ENCODE measurements at regions of chr15 and their contacts with region 1.

Region 1: GRCh38 chr15:101070502-101071273 is 151.5 kb downstream of the LRRK1 start:
- DNase-seq: no peak
- H3K4me3 ChIP-seq: no peak overlapping the region
- H3K27ac ChIP-seq: peak overlapping the region; percentile 92
- H3K4me1 ChIP-seq: peaks cover 22 to 39% (median 30%) of the 10 kb centered on the region in 4 experiments
- H3K27me3 ChIP-seq: no peaks in the 10 kb centered on the region
- CTCF ChIP-seq: no peak
- EP300 ChIP-seq: no peak
- POLR2A ChIP-seq: no peak
- RAD21 ChIP-seq: no peak

Region 2: GRCh38 chr15:101047301-101047781 is 23.3 kb before region 1 on chr15:
- CTCF ChIA-PET with region 1: interaction called, 13 read pairs
- POLR2A ChIA-PET with region 1: interaction called, 14 read pairs
- DNase-seq: peak in 1 of 2 experiments; percentile 53
- H3K4me3 ChIP-seq: no peak overlapping the region; a peak in 1 of 8 replicates
- H3K27ac ChIP-seq: no peak overlapping the region
- H3K4me1 ChIP-seq: peaks cover 0 to 9% (median 5%) of the 10 kb centered on the region in 4 experiments; a peak in 6 of 7 replicates
- H3K27me3 ChIP-seq: 0 out of 7 replicates have a peak, but pooled peaks cover 0 to 2% (median 0%) of the 10 kb centered on the region in 4 experiments
- CTCF ChIP-seq: no peak
- EP300 ChIP-seq: no peak
- POLR2A ChIP-seq: no peak
- RAD21 ChIP-seq: no peak

Region 3: GRCh38 chr15:101056366-101057334 is 14.0 kb before region 1 on chr15:
- CTCF ChIA-PET with region 1: interaction called, 18 read pairs
- POLR2A ChIA-PET with region 1: interaction called, 14 read pairs
- DNase-seq: peak in 1 of 2 experiments; percentile 41
- H3K4me3 ChIP-seq: no peak overlapping the region
- H3K27ac ChIP-seq: no peak overlapping the region
- H3K4me1 ChIP-seq: peaks cover 0 to 7% (median under 1%) of the 10 kb centered on the region in 4 experiments; a peak in 4 of 7 replicates
- H3K27me3 ChIP-seq: no peaks in the 10 kb centered on the region
- CTCF ChIP-seq: 0 out of 4 replicates have a peak, but pooled peaks of 1 of the 3 experiments have one; percentile 3
- EP300 ChIP-seq: no peak
- POLR2A ChIP-seq: no peak
- RAD21 ChIP-seq: peak; percentile 42 to 53

Region 4: DNA sequence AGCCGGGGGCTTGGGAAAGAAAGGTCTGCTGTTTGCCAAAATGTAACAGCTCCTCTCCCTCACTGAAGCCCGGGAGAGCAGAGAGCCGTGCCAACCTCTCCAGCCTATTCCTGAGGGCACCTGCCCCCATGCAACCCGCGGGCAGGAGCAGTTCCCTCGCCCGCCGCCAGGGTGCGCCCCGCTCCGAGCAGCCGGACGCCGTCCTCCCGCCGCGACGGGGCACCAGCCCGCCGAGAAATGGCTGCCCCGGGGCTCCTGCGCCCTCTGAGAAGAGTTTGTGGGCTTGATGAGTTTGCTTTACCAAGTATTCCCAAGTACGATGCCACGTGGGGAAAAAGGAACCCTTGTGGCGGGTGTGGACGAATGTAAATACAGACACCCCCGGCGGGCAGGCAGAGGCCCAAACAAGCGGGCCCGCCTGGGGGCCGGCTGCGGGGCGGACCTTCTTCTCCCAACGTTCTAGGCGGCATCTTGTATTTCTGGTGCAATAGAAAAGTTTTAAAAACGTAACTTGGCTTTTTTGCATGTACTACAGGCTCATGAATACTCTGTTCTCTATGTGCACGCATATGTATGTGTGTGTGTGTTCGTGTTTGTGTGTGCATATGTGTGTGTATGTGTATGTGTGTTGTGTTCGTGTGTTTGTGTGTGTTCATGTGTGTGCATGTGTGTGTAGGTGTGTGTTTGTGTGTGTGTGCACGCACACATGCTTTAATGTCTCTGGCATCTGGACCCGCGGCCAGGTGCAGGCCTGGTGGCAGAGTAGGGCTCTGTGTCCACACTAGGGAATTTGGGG is 18.3 kb after region 1 on chr15:
- CTCF ChIA-PET with region 1: interaction called, 30 read pairs
- POLR2A ChIA-PET with region 1: interaction called, 13 read pairs
- DNase-seq: peak; percentile 34 to 98
- H3K4me3 ChIP-seq: no peak overlapping the region
- H3K27ac ChIP-seq: no peak overlapping the region
- H3K4me1 ChIP-seq: peaks cover 0 to 1% (median 0%) of the 10 kb centered on the region in 4 experiments; a peak in 3 of 7 replicates
- H3K27me3 ChIP-seq: no peaks in the 10 kb centered on the region
- CTCF ChIP-seq: peak; percentile 89 to 95 (median 89)
- EP300 ChIP-seq: 0 out of 3 replicates have a peak, but pooled peaks of 1 of the 2 experiments have one; percentile 37
- POLR2A ChIP-seq: no peak
- RAD21 ChIP-seq: peak; percentile 81 to 91

Region 5: GRCh38 chr15:101213581-101213980 is 142.9 kb after region 1 on chr15:
- CTCF ChIA-PET with region 1: no interaction called
- POLR2A ChIA-PET with region 1: no interaction called
- DNase-seq: no peak
- H3K4me3 ChIP-seq: no peak overlapping the region
- H3K27ac ChIP-seq: no peak overlapping the region
- H3K4me1 ChIP-seq: peaks cover 0 to 2% (median 0%) of the 10 kb centered on the region in 4 experiments; a peak in 1 of 7 replicates
- H3K27me3 ChIP-seq: no peaks in the 10 kb centered on the region
- CTCF ChIP-seq: no peak
- EP300 ChIP-seq: no peak
- POLR2A ChIP-seq: no peak
- RAD21 ChIP-seq: no peak

Region 6: GRCh38 chr15:101251830-101252820 is 181.4 kb after region 1 on chr15 and contains the start of gene CHSY1:
- CTCF ChIA-PET with region 1: interaction called, 3 read pairs
- POLR2A ChIA-PET with region 1: interaction called, 10 read pairs
- DNase-seq: peak in 1 of 2 experiments; percentile 80
- H3K4me3 ChIP-seq: peak within 1 kb of the TSS; percentile 55 to 77 (median 74)
- H3K27ac ChIP-seq: peak within 1 kb of the TSS; percentile 18; the same call in 1 of the 2 replicates
- H3K4me1 ChIP-seq: peaks cover 6 to 14% (median 11%) of the 10 kb centered on the region in 4 experiments
- H3K27me3 ChIP-seq: peaks cover 0 to 3% (median 0%) of the 10 kb centered on the region in 4 experiments; a peak in 3 of 7 replicates
- CTCF ChIP-seq: no peak
- EP300 ChIP-seq: no peak
- POLR2A ChIP-seq: peak in 1 of 2 experiments; percentile 36; a peak in 2 of 3 replicates
- RAD21 ChIP-seq: peak in 1 of 2 experiments; percentile 17; a peak in 1 of 4 replicates
- total RNA-seq, gene CHSY1: 60.3 and 60.7 TPM in 2 replicates

Region 7: DNA sequence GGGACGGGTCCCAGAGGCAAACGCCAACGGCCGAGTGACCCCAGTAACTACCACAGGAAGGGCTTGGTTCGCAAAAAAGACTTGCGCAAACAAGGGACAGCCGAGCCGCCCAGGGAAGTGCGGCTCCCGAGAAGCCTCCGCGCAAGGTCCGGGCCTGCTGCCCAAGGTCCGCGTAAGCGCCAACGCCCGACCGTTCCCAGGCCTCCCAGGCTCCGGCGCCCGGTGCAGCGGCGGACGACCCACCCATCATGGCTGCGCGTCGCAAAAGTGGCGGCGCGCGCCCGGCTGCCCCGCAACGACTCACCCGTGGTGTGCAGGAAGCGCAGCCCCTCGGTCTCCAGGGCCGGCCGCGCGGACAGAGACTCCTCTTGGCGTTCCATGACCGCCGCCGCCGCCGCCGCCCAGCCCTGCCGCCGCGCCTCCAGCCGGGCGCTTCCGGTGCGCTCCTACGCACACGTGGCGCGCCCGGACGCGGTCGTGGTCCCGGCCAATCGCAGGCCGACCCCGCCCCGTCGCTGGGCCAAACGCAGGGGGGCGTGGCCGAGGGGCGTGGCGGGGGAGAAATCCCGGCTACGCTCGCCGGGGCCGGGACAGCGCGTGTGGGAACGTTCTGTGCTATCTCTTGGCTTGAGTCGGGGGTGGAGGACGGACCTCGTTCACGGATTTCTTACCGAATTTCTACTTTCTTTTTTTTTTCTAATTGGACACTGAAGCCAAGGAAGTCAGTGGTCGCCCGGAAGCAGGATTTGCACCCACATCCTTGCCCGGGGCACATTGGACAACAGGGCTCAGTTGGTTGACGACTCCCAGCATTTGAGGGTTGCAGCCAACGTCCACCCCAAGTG is 206.6 kb after region 1 on chr15 and contains the start of gene SELENOS:
- CTCF ChIA-PET with region 1: no interaction called
- POLR2A ChIA-PET with region 1: no interaction called
- DNase-seq: peak in 1 of 2 experiments; percentile 94
- H3K4me3 ChIP-seq: peak within 1 kb of the TSS; percentile 90 to 94 (median 93)
- H3K27ac ChIP-seq: peak within 1 kb of the TSS; percentile 13; the same call in 1 of the 2 replicates
- H3K4me1 ChIP-seq: peaks cover 0 to 3% (median 1%) of the 10 kb centered on the region in 4 experiments; a peak in 3 of 7 replicates
- H3K27me3 ChIP-seq: no peaks in the 10 kb centered on the region
- CTCF ChIP-seq: no peak
- EP300 ChIP-seq: no peak
- POLR2A ChIP-seq: peak in 1 of 2 experiments; percentile 51; a peak in 2 of 3 replicates
- RAD21 ChIP-seq: no peak
- total RNA-seq, gene SELENOS: 45.2 and 46.0 TPM in 2 replicates